ENCODE measurements at regions of chr6 and their contacts with region 1.

Region 1: DNA sequence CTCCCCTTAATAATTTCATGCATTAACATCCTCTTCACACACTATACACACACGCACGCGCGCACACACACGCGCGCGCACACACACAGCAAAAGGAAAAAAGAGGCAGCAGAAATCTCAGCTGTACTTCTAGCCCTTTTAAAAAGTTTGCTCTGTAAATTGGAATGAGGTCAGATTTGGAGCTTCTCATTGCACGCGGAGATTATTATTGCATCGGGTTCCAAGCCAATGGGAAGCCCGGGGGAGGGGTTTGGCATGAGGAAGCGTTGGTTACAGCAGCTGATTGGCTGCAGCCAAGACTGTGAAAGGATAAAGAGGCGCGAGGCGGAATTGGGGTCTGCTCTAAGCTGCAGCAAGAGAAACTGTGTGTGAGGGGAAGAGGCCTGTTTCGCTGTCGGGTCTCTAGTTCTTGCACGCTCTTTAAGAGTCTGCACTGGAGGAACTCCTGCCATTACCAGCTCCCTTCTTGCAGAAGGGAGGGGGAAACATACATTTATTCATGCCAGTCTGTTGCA is at the start of gene SOX4:
- DNase-seq: peak; percentile 93
- ATAC-seq: peak; percentile 76
- H3K4me3 ChIP-seq: peak within 1 kb of the TSS; percentile 69 to 81
- H3K27ac ChIP-seq: peak within 1 kb of the TSS; percentile 87
- H3K4me1 ChIP-seq: peaks cover 9 to 36% of the 10 kb centered on the region in 2 experiments
- H3K27me3 ChIP-seq: no peaks in the 10 kb centered on the region
- CTCF ChIP-seq: no peak
- POLR2A ChIP-seq: peak; percentile 99
- RAD21 ChIP-seq: no peak
- total RNA-seq, gene SOX4: 67.0 TPM

Region 2: GRCh38 chr6:20564269-20564668 is 1029.2 kb before region 1 on chr6:
- CTCF ChIA-PET with region 1: interaction called, 56 read pairs
- POLR2A ChIA-PET with region 1: interaction called, 10 read pairs
- RAD21 ChIA-PET with region 1: interaction called, 4 to 5 read pairs
- intact Hi-C with region 1: loop called (anchors 2 kb)
- DNase-seq: peak; percentile 19
- ATAC-seq: no peak
- H3K4me3 ChIP-seq: no peak overlapping the region
- H3K27ac ChIP-seq: no peak overlapping the region
- H3K4me1 ChIP-seq: no peaks in the 10 kb centered on the region
- H3K27me3 ChIP-seq: no peaks in the 10 kb centered on the region
- CTCF ChIP-seq: peak; percentile 40 to 76 (median 62); a peak in 5 of 6 replicates
- POLR2A ChIP-seq: no peak
- RAD21 ChIP-seq: peak; percentile 78

Region 3: GRCh38 chr6:20789162-20789561 is 804.3 kb before region 1 on chr6:
- CTCF ChIA-PET with region 1: no interaction called
- POLR2A ChIA-PET with region 1: no interaction called
- RAD21 ChIA-PET with region 1: no interaction called
- intact Hi-C with region 1: loop called (anchors 5 kb)
- DNase-seq: no peak
- ATAC-seq: no peak
- H3K4me3 ChIP-seq: no peak overlapping the region
- H3K27ac ChIP-seq: no peak overlapping the region
- H3K4me1 ChIP-seq: no peaks in the 10 kb centered on the region
- H3K27me3 ChIP-seq: no peaks in the 10 kb centered on the region
- CTCF ChIP-seq: no peak
- POLR2A ChIP-seq: no peak
- RAD21 ChIP-seq: peak; percentile 43; the same call in 1 of the 2 replicates

Region 4: DNA sequence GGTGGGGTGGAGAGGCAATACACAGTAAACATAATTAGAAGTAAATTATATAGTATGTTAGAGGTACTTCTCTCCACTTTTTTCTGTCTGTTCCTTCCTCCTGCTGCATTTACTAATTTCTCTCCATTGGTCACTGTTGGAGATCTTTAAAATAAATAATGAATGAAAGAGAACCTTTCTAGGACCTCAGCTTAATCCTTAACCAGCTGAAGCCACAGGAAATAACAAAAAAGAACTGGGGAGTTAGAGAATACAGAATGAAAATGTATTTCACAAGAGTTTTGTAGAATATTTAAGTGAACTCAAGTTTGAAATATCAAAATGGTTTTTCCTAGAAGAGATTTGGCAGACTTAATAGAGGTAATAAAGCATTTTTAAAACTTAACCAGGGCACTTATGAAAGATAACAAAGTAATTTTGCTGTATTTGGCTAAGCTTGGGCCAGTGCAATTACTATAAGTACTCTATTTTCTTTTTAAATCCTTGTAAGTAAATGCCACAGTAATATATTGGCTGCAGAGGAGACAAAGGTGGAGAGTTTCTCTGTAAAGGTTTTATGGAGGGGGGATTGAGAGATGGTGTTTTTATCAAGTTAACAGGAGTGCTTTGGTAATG is 654.2 kb before region 1 on chr6:
- CTCF ChIA-PET with region 1: interaction called, 4 read pairs
- POLR2A ChIA-PET with region 1: no interaction called
- RAD21 ChIA-PET with region 1: no interaction called
- intact Hi-C with region 1: loop called (anchors 5 kb)
- DNase-seq: no peak
- ATAC-seq: no peak
- H3K4me3 ChIP-seq: no peak overlapping the region
- H3K27ac ChIP-seq: no peak overlapping the region
- H3K4me1 ChIP-seq: peaks cover under 1 to 13% of the 10 kb centered on the region in 2 experiments; a peak in 2 of 4 replicates
- H3K27me3 ChIP-seq: no peaks in the 10 kb centered on the region
- CTCF ChIP-seq: no peak
- POLR2A ChIP-seq: no peak
- RAD21 ChIP-seq: no peak

Region 5: DNA sequence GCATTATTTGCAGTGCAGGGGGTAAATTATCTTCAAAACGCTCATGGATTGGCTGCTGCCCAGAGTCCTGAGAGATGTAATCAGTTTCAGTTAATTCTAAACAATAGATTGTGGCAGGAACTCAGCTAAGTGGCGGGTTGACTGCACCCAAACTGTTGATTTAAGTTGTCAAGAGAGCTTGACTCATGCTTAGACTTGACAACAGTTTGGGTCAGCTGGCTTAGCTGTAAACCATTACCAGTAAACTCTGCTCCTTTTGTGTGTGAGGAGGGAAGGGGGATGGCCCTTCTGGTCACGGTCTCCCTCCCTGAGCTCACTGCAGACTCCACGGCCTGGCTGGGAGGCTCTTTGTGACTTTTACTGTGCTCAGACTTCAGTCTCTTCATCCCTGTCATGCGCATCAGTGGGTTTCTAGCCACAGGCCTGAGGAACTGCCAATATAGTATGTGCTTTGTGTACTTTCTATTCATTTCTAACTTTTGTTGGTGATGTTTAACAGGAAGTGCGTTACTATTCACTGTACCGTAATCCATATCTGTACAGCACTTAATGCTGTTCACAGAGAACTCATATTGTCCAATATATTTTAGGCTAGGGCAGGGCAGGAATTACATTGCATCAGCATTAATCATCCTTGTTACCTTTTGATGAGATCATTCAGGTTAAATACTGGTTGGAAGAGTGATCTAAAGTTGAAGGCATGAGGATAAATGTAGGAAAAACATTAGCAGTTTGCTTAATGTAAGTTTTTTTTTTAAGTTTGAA is 570.9 kb before region 1 on chr6:
- CTCF ChIA-PET with region 1: no interaction called
- POLR2A ChIA-PET with region 1: interaction called, 10 read pairs
- RAD21 ChIA-PET with region 1: no interaction called
- intact Hi-C with region 1: no loop called
- DNase-seq: peak; percentile 85
- ATAC-seq: peak; percentile 88
- H3K4me3 ChIP-seq: peak overlapping the region; percentile 2 to 35; a peak in 2 of 4 replicates
- H3K27ac ChIP-seq: peak overlapping the region; percentile 88
- H3K4me1 ChIP-seq: peaks cover 51 to 66% of the 10 kb centered on the region in 2 experiments
- H3K27me3 ChIP-seq: no peaks in the 10 kb centered on the region
- CTCF ChIP-seq: no peak
- POLR2A ChIP-seq: no peak
- RAD21 ChIP-seq: peak; percentile 38

Region 6: GRCh38 chr6:21348504-21349195 is 244.8 kb before region 1 on chr6:
- CTCF ChIA-PET with region 1: no interaction called
- POLR2A ChIA-PET with region 1: no interaction called
- RAD21 ChIA-PET with region 1: no interaction called
- intact Hi-C with region 1: loop called (anchors 10 kb)
- DNase-seq: no peak
- ATAC-seq: peak; percentile 53; the same call in 1 of the 2 replicates
- H3K4me3 ChIP-seq: no peak overlapping the region
- H3K27ac ChIP-seq: no peak overlapping the region
- H3K4me1 ChIP-seq: no peaks in the 10 kb centered on the region; a peak in 2 of 4 replicates
- H3K27me3 ChIP-seq: no peaks in the 10 kb centered on the region
- CTCF ChIP-seq: no peak
- POLR2A ChIP-seq: no peak
- RAD21 ChIP-seq: no peak

Region 7: DNA sequence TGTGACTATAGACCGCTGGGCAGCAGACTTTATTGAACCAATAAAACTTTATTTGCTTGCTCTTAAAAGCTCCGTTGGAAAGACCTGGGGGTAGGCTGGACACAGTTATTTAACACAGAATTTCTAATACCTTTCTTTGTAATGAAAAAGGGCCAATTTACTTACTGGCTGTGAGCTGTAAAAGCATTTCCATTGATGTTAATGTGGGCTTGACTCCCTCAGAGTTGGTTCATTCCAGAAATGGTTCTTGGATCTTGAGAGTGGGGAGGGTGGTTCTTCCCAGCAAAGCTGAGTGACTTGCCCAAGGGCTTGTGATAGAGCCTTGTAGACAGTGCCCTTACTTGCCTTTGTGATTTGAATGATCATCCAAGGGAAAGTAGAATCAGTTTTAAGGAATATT is 100.7 kb after region 1 on chr6:
- CTCF ChIA-PET with region 1: no interaction called
- POLR2A ChIA-PET with region 1: no interaction called
- RAD21 ChIA-PET with region 1: no interaction called
- intact Hi-C with region 1: no loop called
- DNase-seq: no peak
- ATAC-seq: no peak
- H3K4me3 ChIP-seq: no peak overlapping the region
- H3K27ac ChIP-seq: no peak overlapping the region
- H3K4me1 ChIP-seq: no peaks in the 10 kb centered on the region
- H3K27me3 ChIP-seq: no peaks in the 10 kb centered on the region
- CTCF ChIP-seq: no peak
- POLR2A ChIP-seq: no peak
- RAD21 ChIP-seq: no peak

Region 8: DNA sequence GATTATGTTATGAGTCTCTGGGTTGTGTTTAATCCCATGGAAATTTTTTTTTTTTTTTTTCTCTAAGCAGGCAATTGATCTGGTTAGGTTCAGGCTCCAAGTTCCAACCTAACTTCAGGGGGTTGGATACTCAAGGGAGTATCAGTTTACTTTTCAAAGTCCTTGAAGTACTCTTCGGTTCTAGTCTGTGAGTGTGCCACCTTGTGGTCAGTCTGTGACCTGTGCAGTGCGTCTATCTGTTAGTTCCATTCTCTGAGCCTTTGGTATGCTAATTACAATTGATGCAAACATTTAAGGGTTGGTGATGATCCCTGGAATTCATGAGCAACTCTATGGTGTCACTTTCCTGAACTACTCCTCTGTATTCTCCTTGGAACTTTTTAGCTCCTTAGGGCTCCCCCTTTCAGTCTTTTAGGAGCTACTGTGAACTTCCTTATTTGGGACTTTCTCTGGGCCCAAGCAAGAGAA is 342.1 kb after region 1 on chr6:
- CTCF ChIA-PET with region 1: no interaction called
- POLR2A ChIA-PET with region 1: no interaction called
- RAD21 ChIA-PET with region 1: no interaction called
- intact Hi-C with region 1: loop called (anchors 5 kb)
- DNase-seq: peak; percentile 27
- ATAC-seq: peak; percentile 95
- H3K4me3 ChIP-seq: no peak overlapping the region
- H3K27ac ChIP-seq: no peak overlapping the region
- H3K4me1 ChIP-seq: no peaks in the 10 kb centered on the region
- H3K27me3 ChIP-seq: no peaks in the 10 kb centered on the region
- CTCF ChIP-seq: peak; percentile 43 to 84 (median 78); a peak in 5 of 6 replicates
- POLR2A ChIP-seq: no peak
- RAD21 ChIP-seq: peak; percentile 65